ENCODE measurements at regions of chr3 and their contacts with region 1.

Region 1: GRCh38 chr3:177109688-177110330 is 87.5 kb downstream of the TBL1XR1 start:
- DNase-seq: no peak
- ATAC-seq: peak; percentile 64
- H3K4me3 Mint-ChIP-seq: peak overlapping the region; percentile 35
- H3K27ac Mint-ChIP-seq: peak overlapping the region; percentile 41
- H3K4me1 Mint-ChIP-seq: peaks cover 80% of the 10 kb centered on the region
- H3K27me3 Mint-ChIP-seq: no peaks in the 10 kb centered on the region
- CTCF ChIP-seq: no peak

Region 2: GRCh38 chr3:175193815-175194518 is 1915.8 kb before region 1 on chr3:
- CTCF ChIA-PET with region 1: no interaction called
- POLR2A ChIA-PET with region 1: no interaction called
- intact Hi-C with region 1: no loop called
- DNase-seq: no peak
- ATAC-seq: no peak
- H3K4me3 Mint-ChIP-seq: no peak overlapping the region
- H3K27ac Mint-ChIP-seq: no peak overlapping the region
- H3K4me1 Mint-ChIP-seq: no peaks in the 10 kb centered on the region
- H3K27me3 Mint-ChIP-seq: no peaks in the 10 kb centered on the region
- CTCF ChIP-seq: no peak

Region 3: DNA sequence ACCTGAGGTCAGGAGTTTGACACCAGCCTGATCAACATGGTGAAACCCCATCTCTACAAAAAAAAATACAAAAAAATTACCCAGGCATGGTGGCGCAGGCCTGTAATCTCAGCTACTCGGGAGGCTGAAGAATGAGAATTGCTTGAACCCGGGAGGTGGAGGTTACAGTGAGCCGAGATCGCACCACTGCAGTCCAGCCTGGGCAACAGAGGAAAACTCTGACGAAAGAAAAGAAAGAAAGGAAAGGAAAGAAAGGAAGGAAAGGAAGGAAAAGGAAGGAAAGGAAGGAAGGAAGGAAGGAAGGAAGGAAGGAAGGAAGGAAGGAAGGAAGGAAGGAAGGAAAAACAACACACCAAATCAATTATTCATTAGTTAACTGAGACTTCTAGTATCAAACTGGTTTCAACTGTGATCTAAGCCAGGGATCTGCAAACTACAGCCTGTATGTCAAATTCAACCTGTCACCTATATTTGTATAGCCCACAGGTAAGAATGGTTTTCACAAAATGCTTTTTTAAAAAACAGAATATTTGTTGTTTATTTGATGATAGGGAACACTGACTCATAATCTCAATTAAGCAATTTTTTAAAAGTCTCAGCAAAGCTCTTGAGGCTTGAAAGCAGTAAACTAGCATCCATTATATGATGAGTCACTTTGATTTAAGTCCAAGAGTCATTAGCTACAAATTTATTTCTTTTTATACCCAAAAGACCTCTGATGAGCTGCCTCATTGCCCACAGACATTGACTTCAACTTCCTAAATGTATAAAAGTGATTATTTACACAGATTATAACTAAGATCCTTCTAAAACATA is 40.1 kb before region 1 on chr3:
- CTCF ChIA-PET with region 1: no interaction called
- POLR2A ChIA-PET with region 1: interaction called, 9 read pairs
- intact Hi-C with region 1: loop called (anchors 5 kb)
- DNase-seq: no peak
- ATAC-seq: no peak
- H3K4me3 Mint-ChIP-seq: no peak overlapping the region
- H3K27ac Mint-ChIP-seq: no peak overlapping the region
- H3K4me1 Mint-ChIP-seq: peaks cover 48% of the 10 kb centered on the region
- H3K27me3 Mint-ChIP-seq: no peaks in the 10 kb centered on the region
- CTCF ChIP-seq: no peak

Region 4: DNA sequence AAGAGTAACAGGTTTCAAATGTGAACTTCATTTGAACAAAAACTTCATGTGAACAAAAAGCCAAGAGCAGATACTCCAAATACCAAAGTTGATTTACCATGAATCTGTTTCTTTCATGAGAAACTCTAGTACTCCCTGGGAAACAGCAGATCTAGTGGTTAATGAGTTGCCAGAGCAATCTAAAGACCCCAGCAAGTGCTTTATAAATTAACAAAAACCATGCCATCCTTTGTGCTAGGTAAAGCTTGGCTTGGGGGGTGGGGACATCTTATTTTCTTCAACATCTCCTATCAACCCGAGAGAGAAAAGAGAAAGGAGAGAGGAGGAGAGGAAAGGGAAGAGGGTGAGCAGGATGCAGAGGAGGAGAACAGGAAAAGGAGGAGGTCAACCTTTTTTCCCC is 13.2 kb before region 1 on chr3:
- CTCF ChIA-PET with region 1: no interaction called
- POLR2A ChIA-PET with region 1: no interaction called
- intact Hi-C with region 1: loop called (anchors 1 kb)
- DNase-seq: no peak
- ATAC-seq: no peak
- H3K4me3 Mint-ChIP-seq: no peak overlapping the region
- H3K27ac Mint-ChIP-seq: peak overlapping the region; percentile 61
- H3K4me1 Mint-ChIP-seq: peaks cover 27% of the 10 kb centered on the region
- H3K27me3 Mint-ChIP-seq: no peaks in the 10 kb centered on the region
- CTCF ChIP-seq: no peak

Region 5: GRCh38 chr3:177119829-177120228 is 10.0 kb after region 1 on chr3:
- CTCF ChIA-PET with region 1: no interaction called
- POLR2A ChIA-PET with region 1: no interaction called
- intact Hi-C with region 1: loop called (anchors 2 kb)
- DNase-seq: no peak
- ATAC-seq: no peak
- H3K4me3 Mint-ChIP-seq: no peak overlapping the region
- H3K27ac Mint-ChIP-seq: no peak overlapping the region
- H3K4me1 Mint-ChIP-seq: peaks cover 82% of the 10 kb centered on the region
- H3K27me3 Mint-ChIP-seq: no peaks in the 10 kb centered on the region
- CTCF ChIP-seq: no peak

Region 6: GRCh38 chr3:177144923-177145780 is 35.3 kb after region 1 on chr3:
- CTCF ChIA-PET with region 1: no interaction called
- POLR2A ChIA-PET with region 1: interaction called, 3 read pairs
- intact Hi-C with region 1: loop called (anchors 5 kb)
- DNase-seq: no peak
- ATAC-seq: peak; percentile 68
- H3K4me3 Mint-ChIP-seq: peak overlapping the region; percentile 54
- H3K27ac Mint-ChIP-seq: peak overlapping the region; percentile 83
- H3K4me1 Mint-ChIP-seq: peaks cover 90% of the 10 kb centered on the region
- H3K27me3 Mint-ChIP-seq: no peaks in the 10 kb centered on the region
- CTCF ChIP-seq: no peak

Measured in activated B cell treated with CpG ODN at 0.5 μM for 24 hours (primary cell).